ENCODE measurements at regions of chr1 and their contacts with region 1.

Region 1: DNA sequence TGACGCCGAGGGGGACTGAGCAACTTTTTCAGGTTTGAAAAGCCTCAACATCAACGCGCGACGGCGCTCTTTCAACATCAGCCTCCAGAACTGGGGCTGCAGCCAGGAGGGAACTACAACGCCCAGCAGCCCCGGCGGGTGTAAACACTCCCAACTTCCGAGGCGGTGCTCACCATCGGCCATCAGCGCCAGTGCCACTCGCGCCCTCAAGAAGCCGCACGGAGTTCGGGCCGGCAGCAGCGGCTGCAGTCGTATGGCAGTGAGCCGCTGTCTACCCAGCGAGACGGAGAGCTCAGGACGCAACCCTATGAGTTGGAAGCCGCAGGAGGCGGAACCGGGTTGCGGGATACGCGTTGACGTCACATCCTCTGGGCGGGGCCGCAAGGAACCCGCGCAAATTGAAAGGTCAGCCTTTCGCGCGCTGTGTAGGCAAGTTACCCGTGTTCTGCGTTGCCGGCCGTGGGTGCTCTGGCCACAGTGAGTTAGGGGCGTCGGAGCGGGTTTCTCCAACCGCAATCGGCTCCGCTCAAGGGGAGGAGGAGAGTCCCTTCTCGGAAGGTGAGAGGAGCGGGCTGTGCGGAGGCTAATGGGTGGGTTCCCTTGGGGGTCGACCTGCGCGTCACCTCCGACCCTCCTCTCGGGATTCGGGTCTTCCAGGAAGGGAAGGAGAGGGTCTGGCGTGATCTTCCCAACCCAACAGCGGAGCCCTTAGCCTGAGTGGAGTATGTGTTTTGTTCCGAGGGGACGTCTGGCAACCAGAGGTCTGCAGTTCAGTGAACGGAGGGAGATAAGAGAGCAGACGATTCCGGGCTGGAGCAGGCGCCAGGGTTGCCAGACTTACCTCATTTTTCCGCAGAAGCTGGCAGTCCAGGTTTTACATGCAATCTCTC is at the start of gene EXO1:
- DNase-seq: peak; percentile 97
- H3K4me3 ChIP-seq: peak within 1 kb of the TSS; percentile 59 to 88 (median 64)
- H3K27ac ChIP-seq: peak within 1 kb of the TSS; percentile 95 to 100 (median 99)
- H3K4me1 ChIP-seq: peaks cover 0 to 19% (median 16%) of the 10 kb centered on the region in 6 donors
- H3K27me3 ChIP-seq: no peaks in the 10 kb centered on the region
- CTCF ChIP-seq: peak in 6 of 11 experiments; percentile 14 to 50 (median 38)
- POLR2A ChIP-seq: no peak
- total RNA-seq, gene EXO1: 0.85 to 4.4 (median 1.7) TPM

Region 2: DNA sequence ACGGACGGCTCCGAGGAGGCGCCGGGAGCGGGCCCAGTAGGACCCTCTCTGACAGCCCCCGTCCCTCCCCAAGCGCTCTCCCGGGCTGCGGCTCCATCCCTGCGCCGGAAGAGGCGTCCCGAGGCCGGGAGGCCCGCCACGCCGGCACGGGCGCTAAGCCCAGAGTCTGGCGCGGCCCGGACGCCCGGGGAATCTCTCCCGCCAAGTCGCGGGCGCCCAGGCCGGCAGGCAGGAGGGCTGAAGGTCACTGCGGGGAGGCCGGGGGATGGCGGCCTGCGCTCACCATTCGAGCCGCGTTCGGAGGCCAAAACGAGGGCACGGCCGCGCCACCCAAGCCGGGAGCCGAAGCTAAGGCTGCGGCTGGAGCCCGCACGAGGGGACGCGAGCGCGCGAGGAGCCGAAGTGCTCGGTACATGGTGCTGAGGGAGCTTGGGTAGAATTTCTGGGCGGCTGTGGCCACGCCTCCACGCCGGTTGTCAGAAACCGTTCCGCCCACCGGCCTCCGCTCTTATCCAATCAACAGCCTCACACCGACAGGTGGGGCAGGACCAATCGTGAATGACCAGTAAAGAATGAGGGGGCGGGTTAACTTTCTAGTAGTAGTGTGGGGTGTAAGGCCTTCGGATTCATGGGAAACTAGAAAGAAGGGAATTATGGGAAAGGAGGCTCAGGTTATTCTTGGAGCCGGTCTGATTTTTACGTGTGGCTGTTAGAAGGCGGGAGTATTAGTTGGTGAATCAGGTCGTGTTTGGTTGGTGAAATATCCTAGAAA is 328.5 kb before region 1 on chr1 and contains the start of gene FH:
- intact Hi-C with region 1: loop called (anchors 5 kb)
- DNase-seq: peak; percentile 97
- H3K4me3 ChIP-seq: peak within 1 kb of the TSS; percentile 69 to 97 (median 91)
- H3K27ac ChIP-seq: peak within 1 kb of the TSS; percentile 85 to 93 (median 88)
- H3K4me1 ChIP-seq: peaks cover 14 to 46% (median 23%) of the 10 kb centered on the region in 6 donors
- H3K27me3 ChIP-seq: no peaks in the 10 kb centered on the region
- CTCF ChIP-seq: peak in 1 of 11 experiments; percentile 12
- POLR2A ChIP-seq: peak in 2 of 3 donors; percentile 36 to 51
- total RNA-seq, gene FH: 28.5 to 49.5 (median 36.0) TPM

Region 3: GRCh38 chr1:241639623-241640028 is 208.4 kb before region 1 on chr1:
- intact Hi-C with region 1: loop called (anchors 10 kb)
- DNase-seq: peak; percentile 91
- H3K4me3 ChIP-seq: peak overlapping the region; percentile 67 to 87 (median 76)
- H3K27ac ChIP-seq: peak overlapping the region; percentile 73 to 93 (median 90)
- H3K4me1 ChIP-seq: peaks cover 18 to 57% (median 41%) of the 10 kb centered on the region in 6 donors
- H3K27me3 ChIP-seq: no peaks in the 10 kb centered on the region
- CTCF ChIP-seq: no peak
- POLR2A ChIP-seq: no peak